ENCODE measurements at regions of chr17 and their contacts with region 1.

Region 1: GRCh38 chr17:8435245-8436168 is at the start of gene NDEL1:
- DNase-seq: peak; percentile 98 to 100 (median 99)

Region 2: GRCh38 chr17:8383143-8383822 is 52.2 kb before region 1 on chr17 and contains the start of gene RPL26:
- intact Hi-C with region 1: loop called (anchors 5 kb)
- DNase-seq: peak; percentile 90 to 99 (median 94)

Region 3: GRCh38 chr17:8479431-8479947 is 44.0 kb after region 1 on chr17:
- intact Hi-C with region 1: loop called (anchors 2 kb)
- DNase-seq: peak; percentile 66 to 97 (median 72)

Measured in posterior cingulate gyrus (tissue), 11 donors.